ENCODE measurements at regions of chr4 and their contacts with region 1.

Region 1: GRCh38 chr4:110310795-110311194 is 112.4 kb upstream of the ELOVL6 start:
- DNase-seq: no peak
- ATAC-seq: peak; percentile 53; the same call in 1 of the 2 replicates
- H3K4me3 ChIP-seq: no peak overlapping the region
- H3K27ac ChIP-seq: no peak overlapping the region
- H3K4me1 ChIP-seq: no peaks in the 10 kb centered on the region
- H3K27me3 ChIP-seq: no peaks in the 10 kb centered on the region
- CTCF ChIP-seq: no peak
- POLR2A ChIP-seq: no peak
- RAD21 ChIP-seq: no peak

Region 2: DNA sequence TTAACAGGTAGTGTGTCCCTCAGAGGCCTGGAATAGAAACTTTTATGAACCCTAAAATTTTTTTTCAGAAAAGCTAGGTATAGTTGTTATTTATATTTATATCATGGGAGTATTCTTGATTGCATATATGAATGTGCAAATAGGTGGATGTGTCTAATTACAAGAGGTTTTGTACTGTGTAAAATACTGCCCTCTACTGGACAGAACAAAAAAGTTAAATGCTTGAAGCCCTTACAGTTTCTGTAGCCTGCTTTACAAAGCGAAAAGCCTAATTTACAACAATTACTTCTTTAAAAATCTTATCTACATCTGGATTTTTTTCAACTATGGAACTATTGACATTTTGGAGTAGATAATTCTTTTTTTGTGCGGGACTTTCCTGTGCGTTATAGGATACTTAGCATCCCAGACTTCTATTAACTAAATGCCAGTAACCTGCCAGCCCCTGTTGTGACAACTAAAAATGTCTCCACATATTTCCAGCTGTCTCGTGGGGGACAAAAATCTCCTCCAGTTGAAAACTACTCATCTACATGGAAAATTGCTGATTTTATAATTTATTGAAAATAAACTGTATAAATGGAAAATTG is 200.3 kb after region 1 on chr4:
- CTCF ChIA-PET with region 1: interaction called, 12 read pairs
- POLR2A ChIA-PET with region 1: no interaction called
- RAD21 ChIA-PET with region 1: interaction called in 1 of 2 experiments, 3 read pairs
- intact Hi-C with region 1: loop called (anchors 2 kb)
- DNase-seq: peak; percentile 56
- ATAC-seq: peak; percentile 69
- H3K4me3 ChIP-seq: no peak overlapping the region
- H3K27ac ChIP-seq: no peak overlapping the region
- H3K4me1 ChIP-seq: peaks cover 0 to 9% of the 10 kb centered on the region in 2 experiments; a peak in 1 of 4 replicates
- H3K27me3 ChIP-seq: no peaks in the 10 kb centered on the region
- CTCF ChIP-seq: peak; percentile 52 to 73 (median 62); a peak in 4 of 6 replicates
- POLR2A ChIP-seq: no peak
- RAD21 ChIP-seq: peak; percentile 74

Measured in HCT116 (cell line).